Activated CD4-positive, alpha-beta T cell treated with anti-CD3 and anti-CD28 coated beads for 36 hours (primary cell): ENCODE measurements at regions of chr16 and their contacts with region 1.

Region 1: DNA sequence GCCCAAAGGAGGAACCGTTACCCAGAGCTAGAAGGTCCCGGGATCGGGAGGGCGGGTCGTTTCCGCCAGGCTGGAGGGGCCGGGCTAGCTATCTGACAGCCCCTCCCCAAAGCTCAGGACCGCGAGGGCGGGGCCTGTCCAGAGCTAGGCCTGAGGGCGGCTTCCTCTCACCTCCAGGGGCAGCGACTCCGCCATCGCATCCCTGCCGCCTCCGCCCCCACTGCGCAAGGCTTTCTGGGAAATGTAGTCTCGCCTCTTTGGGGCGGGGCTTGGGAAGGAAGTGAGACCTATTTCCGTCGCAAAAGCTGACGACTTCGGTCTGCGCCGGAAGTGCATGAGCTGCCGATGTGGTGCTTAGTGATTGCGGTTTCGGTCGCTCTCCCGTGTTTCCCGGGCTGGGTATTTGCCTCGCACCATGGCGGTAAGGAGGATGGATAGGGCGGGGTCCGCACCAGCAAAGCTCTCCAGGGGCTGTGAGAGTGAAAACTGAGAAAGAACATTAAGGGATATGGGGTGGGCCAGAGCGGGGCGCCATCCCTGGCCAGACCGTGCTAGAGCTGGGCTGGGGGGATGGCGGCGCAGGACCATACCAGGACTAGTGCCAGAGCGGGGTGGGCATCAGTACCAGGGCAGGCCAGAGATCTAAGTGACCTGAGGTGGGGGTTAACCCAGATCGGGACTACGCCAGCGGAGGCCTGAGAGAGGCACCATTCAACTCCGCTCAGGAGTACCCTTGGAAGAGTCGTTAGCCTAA is at the start of gene TMEM208:
- DNase-seq: peak; percentile 99
- ATAC-seq: peak; percentile 97
- H3K4me3 Mint-ChIP-seq: peak within 1 kb of the TSS; percentile 98
- H3K27ac Mint-ChIP-seq: peak within 1 kb of the TSS; percentile 98
- H3K4me1 Mint-ChIP-seq: peaks cover 42% of the 10 kb centered on the region
- H3K27me3 Mint-ChIP-seq: no peaks in the 10 kb centered on the region
- total RNA-seq, gene TMEM208: 13.6 to 31.2 TPM

Region 2: DNA sequence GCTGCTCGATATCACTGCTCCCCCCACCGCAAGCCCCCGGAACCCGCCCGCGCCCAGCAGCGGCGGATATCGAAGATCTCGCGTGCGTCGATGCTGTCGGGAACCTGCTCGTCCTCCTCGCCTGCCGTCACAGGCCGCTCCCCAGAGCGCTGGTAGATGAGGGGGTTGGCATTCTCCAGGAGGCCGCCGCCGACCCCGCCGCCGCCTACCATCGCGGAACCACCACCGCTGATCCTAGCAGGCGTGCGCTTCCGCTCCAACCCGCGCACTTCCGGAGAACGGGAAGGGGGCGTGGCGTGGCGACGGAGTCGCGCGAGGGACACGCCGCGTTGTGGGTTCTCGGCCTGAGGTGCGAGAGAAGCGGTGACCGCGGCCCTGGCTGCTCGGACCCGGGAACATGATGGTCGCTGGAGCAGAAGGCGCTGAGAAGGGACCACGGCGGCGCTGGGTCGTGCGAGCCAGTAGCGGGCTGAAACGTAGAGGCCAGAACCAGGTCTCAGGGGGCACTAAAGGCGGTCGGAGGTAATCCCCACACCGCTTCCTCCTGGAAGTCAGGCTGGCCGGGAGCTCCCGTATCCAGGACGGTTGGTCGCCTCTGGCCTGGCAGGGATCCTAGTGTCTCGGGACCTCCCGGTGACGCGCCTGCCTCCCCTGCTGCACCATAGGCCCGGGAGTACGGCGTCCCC is 292.7 kb before region 1 on chr16 and contains the start of gene CIAO2B:
- CTCF ChIA-PET with region 1: no interaction called
- POLR2A ChIA-PET with region 1: no interaction called
- intact Hi-C with region 1: loop called in 1 of 2 experiments (anchors 1 kb)
- DNase-seq: peak; percentile 93
- ATAC-seq: peak; percentile 84
- H3K4me3 Mint-ChIP-seq: peak within 1 kb of the TSS; percentile 99
- H3K27ac Mint-ChIP-seq: peak within 1 kb of the TSS; percentile 96
- H3K4me1 Mint-ChIP-seq: peaks cover 57% of the 10 kb centered on the region
- H3K27me3 Mint-ChIP-seq: no peaks in the 10 kb centered on the region
- total RNA-seq, gene CIAO2B: 171 to 186 TPM

Region 3: GRCh38 chr16:67093098-67093726 is 133.8 kb before region 1 on chr16:
- CTCF ChIA-PET with region 1: no interaction called
- POLR2A ChIA-PET with region 1: no interaction called
- intact Hi-C with region 1: no loop called
- DNase-seq: no peak
- ATAC-seq: no peak
- H3K4me3 Mint-ChIP-seq: no peak overlapping the region
- H3K27ac Mint-ChIP-seq: peak overlapping the region; percentile 60
- H3K4me1 Mint-ChIP-seq: peaks cover 8% of the 10 kb centered on the region
- H3K27me3 Mint-ChIP-seq: no peaks in the 10 kb centered on the region

Region 4: DNA sequence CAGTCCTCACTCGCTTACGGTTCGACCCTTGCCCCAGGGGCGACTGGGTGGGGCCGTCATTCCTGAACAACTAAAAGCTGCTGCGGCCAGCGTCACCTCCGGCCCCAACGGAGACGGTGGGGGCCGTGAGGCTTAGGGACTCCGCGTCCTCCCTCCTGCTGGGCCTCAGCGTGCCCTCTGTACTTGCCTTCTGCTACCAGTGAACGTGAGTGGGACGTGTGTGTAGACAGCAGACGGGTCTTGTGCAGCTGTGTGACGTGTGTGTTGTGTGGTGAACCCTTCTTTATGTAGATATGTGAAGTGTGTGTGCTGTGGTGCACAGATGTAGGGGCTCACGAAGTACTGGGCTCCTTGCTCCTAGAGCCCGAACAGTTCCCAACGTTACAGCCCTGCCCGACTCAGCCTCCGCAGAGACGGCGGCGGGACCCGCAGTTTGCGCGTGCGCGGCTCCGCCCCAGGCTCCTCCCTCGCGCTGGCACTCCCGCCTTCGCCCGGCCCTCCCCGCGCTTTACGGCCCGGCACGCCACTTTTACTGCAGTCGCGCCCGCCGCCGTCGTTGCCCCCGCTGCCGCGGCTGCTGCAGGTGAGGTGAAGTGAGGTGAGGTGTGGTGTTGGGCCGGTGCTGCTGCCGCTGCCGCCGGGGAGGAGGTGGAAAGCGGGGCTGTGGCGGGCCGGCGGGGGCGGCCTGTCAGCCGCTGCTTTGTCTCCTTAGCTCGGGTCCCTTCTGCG is 117.4 kb before region 1 on chr16 and contains the start of gene PHAF1:
- CTCF ChIA-PET with region 1: no interaction called
- POLR2A ChIA-PET with region 1: no interaction called
- intact Hi-C with region 1: loop called in 1 of 2 experiments (anchors 1 kb)
- DNase-seq: peak; percentile 98
- ATAC-seq: peak; percentile 94
- H3K4me3 Mint-ChIP-seq: peak within 1 kb of the TSS; percentile 94
- H3K27ac Mint-ChIP-seq: peak within 1 kb of the TSS; percentile 85
- H3K4me1 Mint-ChIP-seq: peaks cover 24% of the 10 kb centered on the region
- H3K27me3 Mint-ChIP-seq: no peaks in the 10 kb centered on the region
- total RNA-seq, gene PHAF1: 12.7 to 14.0 TPM

Region 5: GRCh38 chr16:67183627-67184328 is 43.2 kb before region 1 on chr16 and contains the start of gene MATCAP1:
- CTCF ChIA-PET with region 1: interaction called, 4 read pairs
- POLR2A ChIA-PET with region 1: no interaction called
- intact Hi-C with region 1: loop called in 1 of 2 experiments (anchors 1 kb)
- DNase-seq: peak; percentile 96
- ATAC-seq: peak; percentile 97
- H3K4me3 Mint-ChIP-seq: no peak within 1 kb of the TSS
- H3K27ac Mint-ChIP-seq: no peak within 1 kb of the TSS
- H3K4me1 Mint-ChIP-seq: peaks cover 15% of the 10 kb centered on the region
- H3K27me3 Mint-ChIP-seq: peaks cover 9% of the 10 kb centered on the region
- total RNA-seq, gene MATCAP1: 28.8 to 30.4 TPM

Region 6: GRCh38 chr16:67246934-67247697 is 20.1 kb after region 1 on chr16 and contains the start of gene FHOD1:
- CTCF ChIA-PET with region 1: interaction called, 7 read pairs
- POLR2A ChIA-PET with region 1: interaction called, 15 read pairs
- intact Hi-C with region 1: loop called (anchors 1 kb)
- DNase-seq: peak; percentile 99
- ATAC-seq: peak; percentile 74
- H3K4me3 Mint-ChIP-seq: peak within 1 kb of the TSS; percentile 87
- H3K27ac Mint-ChIP-seq: peak within 1 kb of the TSS; percentile 85
- H3K4me1 Mint-ChIP-seq: peaks cover 52% of the 10 kb centered on the region
- H3K27me3 Mint-ChIP-seq: peaks cover 11% of the 10 kb centered on the region
- total RNA-seq, gene FHOD1: 75.5 to 77.2 TPM

Region 7: DNA sequence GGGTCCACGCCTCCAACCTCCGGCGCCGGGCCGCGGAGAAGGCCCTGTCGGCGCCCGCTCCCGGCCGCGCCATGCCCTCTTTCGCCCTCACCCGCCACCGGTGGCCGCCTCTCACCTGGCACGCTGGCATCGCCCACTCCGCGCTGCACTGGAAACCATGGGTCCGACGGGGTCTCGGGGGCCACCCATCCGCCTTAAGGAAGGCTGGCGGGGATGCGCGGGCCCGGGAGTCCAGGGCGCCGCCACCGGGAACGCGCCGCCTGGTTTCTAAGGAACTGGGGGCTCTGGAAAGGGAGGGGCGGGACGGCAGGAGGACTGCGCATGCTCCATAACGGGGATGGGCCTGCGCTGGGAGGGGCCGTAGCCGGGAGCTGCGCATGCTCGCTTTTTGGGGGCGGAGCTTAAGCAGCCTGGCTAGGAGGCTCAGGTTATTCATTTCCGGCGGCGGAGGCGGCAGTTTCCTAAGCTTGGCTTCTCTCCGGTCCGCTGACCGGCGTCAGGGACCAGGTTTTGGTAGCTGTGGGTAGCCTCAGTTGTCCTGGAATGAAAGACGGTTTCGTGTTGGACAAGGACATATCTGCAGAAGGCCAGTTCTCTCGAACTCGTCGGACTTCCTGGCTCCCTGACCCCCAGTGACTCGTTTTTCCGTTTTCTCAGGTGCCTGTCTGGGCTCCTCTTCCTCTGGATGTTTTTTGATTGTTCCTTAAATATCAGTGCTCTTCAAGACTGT is 492.2 kb after region 1 on chr16 and contains the start of gene GFOD2:
- CTCF ChIA-PET with region 1: no interaction called
- POLR2A ChIA-PET with region 1: no interaction called
- intact Hi-C with region 1: loop called in 1 of 2 experiments (anchors 2 kb)
- DNase-seq: peak; percentile 99
- ATAC-seq: peak; percentile 95
- H3K4me3 Mint-ChIP-seq: peak within 1 kb of the TSS; percentile 82
- H3K27ac Mint-ChIP-seq: peak within 1 kb of the TSS; percentile 98
- H3K4me1 Mint-ChIP-seq: peaks cover 29% of the 10 kb centered on the region
- H3K27me3 Mint-ChIP-seq: no peaks in the 10 kb centered on the region
- total RNA-seq, gene GFOD2: 8.7 to 11.5 TPM

Region 8: DNA sequence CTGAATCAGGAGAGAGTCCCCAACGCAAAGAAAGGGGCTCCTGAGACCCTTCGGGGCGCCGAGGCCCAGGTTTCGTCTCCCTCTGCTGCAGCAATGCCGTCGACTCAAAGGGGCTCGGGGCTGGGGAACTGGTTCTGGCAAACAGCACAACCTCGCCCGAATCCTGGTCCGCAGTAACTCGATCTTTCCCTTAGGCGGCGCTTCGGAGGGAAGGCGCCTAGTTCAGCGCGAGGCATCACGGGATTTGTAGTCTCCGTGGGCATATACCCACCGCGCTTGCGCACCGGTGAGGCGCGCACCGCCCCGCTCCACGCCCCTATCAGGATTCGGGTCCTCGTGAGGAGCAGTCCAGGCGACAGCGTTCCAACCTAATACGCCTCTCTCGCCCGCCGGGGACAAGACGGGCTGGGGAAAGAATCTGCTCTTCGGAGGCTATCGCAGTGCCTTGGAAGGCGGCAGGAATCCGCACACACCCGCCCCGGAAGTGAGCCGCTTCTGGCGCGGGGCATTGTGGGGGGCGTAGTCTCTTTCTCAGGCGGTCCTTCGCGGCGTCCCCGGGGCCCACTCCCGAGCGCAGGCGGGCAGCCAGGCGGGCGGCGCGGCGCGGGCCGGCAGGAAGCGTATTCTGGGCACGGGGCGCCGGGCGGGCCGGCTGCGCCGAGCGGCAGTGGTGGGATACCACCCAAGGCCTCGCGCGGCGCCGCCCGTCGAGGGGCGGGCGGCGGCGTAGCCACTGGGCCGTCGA is 615.0 kb after region 1 on chr16 and contains the start of gene THAP11:
- CTCF ChIA-PET with region 1: no interaction called
- POLR2A ChIA-PET with region 1: no interaction called
- intact Hi-C with region 1: loop called in 1 of 2 experiments (anchors 1 kb)
- DNase-seq: peak; percentile 97
- ATAC-seq: peak; percentile 55
- H3K4me3 Mint-ChIP-seq: peak within 1 kb of the TSS; percentile 94
- H3K27ac Mint-ChIP-seq: peak within 1 kb of the TSS; percentile 97
- H3K4me1 Mint-ChIP-seq: peaks cover 33% of the 10 kb centered on the region
- H3K27me3 Mint-ChIP-seq: no peaks in the 10 kb centered on the region
- total RNA-seq, gene THAP11: 31.8 to 34.5 TPM